ENCODE measurements at regions of chr14 and their contacts with region 1.

Region 1: DNA sequence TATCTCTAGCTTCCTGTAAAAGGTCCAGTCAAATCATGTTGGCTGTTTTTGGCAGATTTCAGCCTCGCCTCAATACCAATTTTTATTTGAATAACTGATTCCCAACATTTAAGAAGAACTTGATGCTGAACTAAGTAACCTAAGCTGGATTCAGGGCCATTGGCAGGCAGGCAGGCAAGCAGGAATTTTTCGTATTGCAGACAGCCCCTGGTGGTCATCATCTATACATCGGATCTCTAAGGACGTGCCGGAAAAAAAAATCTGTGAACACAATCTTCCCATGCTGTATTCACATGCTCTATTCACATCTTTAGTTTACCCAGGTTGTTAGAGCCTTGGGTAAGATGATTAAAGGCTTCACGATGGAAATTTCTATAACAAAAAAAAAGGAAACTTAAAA is 7.0 kb downstream of the VCPKMT start:
- DNase-seq: no peak
- ATAC-seq: no peak
- H3K4me3 ChIP-seq: no peak overlapping the region
- H3K27ac ChIP-seq: no peak overlapping the region
- H3K4me1 ChIP-seq: no peaks in the 10 kb centered on the region
- H3K27me3 ChIP-seq: no peaks in the 10 kb centered on the region
- CTCF ChIP-seq: no peak

Region 2: GRCh38 chr14:49867831-49868723 is 241.3 kb before region 1 on chr14:
- intact Hi-C with region 1: loop called (anchors 10 kb)
- DNase-seq: peak; percentile 99
- ATAC-seq: peak; percentile 98
- H3K4me3 ChIP-seq: peak overlapping the region; percentile 74
- H3K27ac ChIP-seq: peak overlapping the region; percentile 94
- H3K4me1 ChIP-seq: peaks cover 22% of the 10 kb centered on the region
- H3K27me3 ChIP-seq: no peaks in the 10 kb centered on the region
- CTCF ChIP-seq: no peak

Region 3: DNA sequence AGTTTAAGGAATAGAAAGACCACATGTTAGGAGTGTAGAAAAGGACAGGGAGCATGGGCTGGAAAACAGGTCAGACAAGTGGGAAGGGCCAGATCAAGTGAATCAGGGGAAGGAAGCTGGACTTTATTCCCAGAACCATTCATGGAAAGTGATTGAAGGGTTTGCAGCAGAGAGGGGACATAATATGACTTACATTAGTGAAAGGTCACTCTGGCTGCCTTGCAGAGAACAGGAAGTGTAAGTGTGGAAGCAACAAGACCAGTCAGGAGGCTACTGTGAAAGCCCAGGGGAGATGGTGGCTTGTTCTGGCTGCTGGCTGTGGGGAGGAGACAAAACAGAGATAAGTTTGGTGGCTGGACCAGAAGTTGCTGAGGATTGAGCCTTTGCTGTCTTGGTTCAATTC is 62.1 kb before region 1 on chr14:
- intact Hi-C with region 1: no loop called
- DNase-seq: no peak
- ATAC-seq: peak; percentile 63
- H3K4me3 ChIP-seq: no peak overlapping the region
- H3K27ac ChIP-seq: peak overlapping the region; percentile 5
- H3K4me1 ChIP-seq: peaks cover 33% of the 10 kb centered on the region
- H3K27me3 ChIP-seq: no peaks in the 10 kb centered on the region
- CTCF ChIP-seq: no peak